T-cell (primary cell): ENCODE measurements at regions of chr14 and their contacts with region 1.

Region 1: GRCh38 chr14:22570132-22570949 is 18.7 kb downstream of the DAD1 start:
- DNase-seq: peak; percentile 62 to 98 (median 86)
- ATAC-seq: peak; percentile 86 to 90 (median 90)
- H3K4me3 ChIP-seq: peak overlapping the region; percentile 41 to 48
- H3K4me3 Mint-ChIP-seq: peak overlapping the region; percentile 64 to 77 (median 75)
- H3K27ac ChIP-seq: peak overlapping the region; percentile 99
- H3K27ac Mint-ChIP-seq: peak overlapping the region; percentile 98 to 99
- H3K4me1 ChIP-seq: peaks cover 40 to 41% of the 10 kb centered on the region in 2 experiments
- H3K4me1 Mint-ChIP-seq: peaks cover 44 to 69% (median 67%) of the 10 kb centered on the region in 3 donors
- H3K27me3 ChIP-seq: no peaks in the 10 kb centered on the region
- H3K27me3 Mint-ChIP-seq: no peaks in the 10 kb centered on the region

Region 2: DNA sequence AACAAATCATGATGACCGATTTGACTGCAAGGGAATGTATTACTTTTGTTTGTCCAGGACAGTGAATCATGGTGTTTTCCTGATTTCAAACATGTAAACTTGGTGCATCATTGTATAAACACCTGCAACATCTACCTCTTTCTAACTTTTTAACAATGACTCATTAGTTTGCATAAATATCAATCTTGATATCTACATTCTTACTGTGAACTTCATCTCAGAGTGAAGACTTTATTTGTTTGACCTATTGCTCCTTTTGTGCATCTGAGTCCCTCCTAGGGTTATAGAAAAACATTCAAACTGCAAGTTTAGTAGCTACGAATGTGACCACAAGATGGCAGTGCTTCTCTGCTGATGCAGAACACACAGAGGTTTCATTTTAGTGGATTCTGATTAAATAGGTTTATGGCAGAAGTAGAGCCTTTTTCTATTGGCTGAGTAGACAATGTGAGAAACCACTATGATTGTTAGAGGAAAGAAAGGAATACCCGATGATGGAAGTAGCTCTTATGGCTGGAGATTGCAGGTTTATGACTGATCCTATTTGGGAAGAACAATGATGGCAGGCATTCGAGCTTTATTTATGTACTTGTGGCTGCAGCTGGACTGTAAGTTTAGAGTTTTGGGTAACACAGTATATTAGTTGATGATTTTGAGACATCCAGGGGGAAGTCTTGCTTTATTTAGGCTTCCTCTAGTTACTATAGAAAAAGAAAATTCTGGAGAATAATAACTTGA is 652.5 kb before region 1 on chr14:
- CTCF ChIA-PET with region 1: interaction called, 3 to 11 read pairs
- POLR2A ChIA-PET with region 1: no interaction called
- DNase-seq: peak in 32 of 35 experiments; percentile 14 to 84 (median 50)
- ATAC-seq: peak; percentile 63 to 71 (median 64)
- H3K4me3 ChIP-seq: peak overlapping the region in 1 of 2 donors; percentile 18
- H3K4me3 Mint-ChIP-seq: peak overlapping the region; percentile 63 to 75 (median 67)
- H3K27ac ChIP-seq: peak overlapping the region; percentile 15
- H3K27ac Mint-ChIP-seq: peak overlapping the region; percentile 79 to 89
- H3K4me1 ChIP-seq: peaks cover 2 to 43% of the 10 kb centered on the region in 2 experiments
- H3K4me1 Mint-ChIP-seq: peaks cover 48 to 76% (median 66%) of the 10 kb centered on the region in 3 donors
- H3K27me3 ChIP-seq: no peaks in the 10 kb centered on the region
- H3K27me3 Mint-ChIP-seq: no peaks in the 10 kb centered on the region

Region 3: GRCh38 chr14:22549981-22550673 is 20.2 kb before region 1 on chr14:
- CTCF ChIA-PET with region 1: interaction called, 5 to 133 read pairs
- POLR2A ChIA-PET with region 1: interaction called, 4 to 13 read pairs
- DNase-seq: peak in 29 of 35 experiments; percentile 36 to 74 (median 57)
- ATAC-seq: peak; percentile 58 to 65 (median 63)
- H3K4me3 ChIP-seq: peak overlapping the region; percentile 18 to 35
- H3K4me3 Mint-ChIP-seq: peak overlapping the region; percentile 71 to 86 (median 77)
- H3K27ac ChIP-seq: peak overlapping the region; percentile 99
- H3K27ac Mint-ChIP-seq: peak overlapping the region; percentile 98 to 99
- H3K4me1 ChIP-seq: peaks cover 74 to 98% of the 10 kb centered on the region in 2 experiments
- H3K4me1 Mint-ChIP-seq: peaks cover 95 to 96% (median 95%) of the 10 kb centered on the region in 3 donors
- H3K27me3 ChIP-seq: no peaks in the 10 kb centered on the region
- H3K27me3 Mint-ChIP-seq: no peaks in the 10 kb centered on the region

Region 4: GRCh38 chr14:22598099-22598899 is 28.0 kb after region 1 on chr14 and contains the start of gene ABHD4:
- CTCF ChIA-PET with region 1: interaction called, 6 to 12 read pairs
- POLR2A ChIA-PET with region 1: interaction called, 4 read pairs
- DNase-seq: peak in 30 of 35 experiments; percentile 12 to 71 (median 37)
- ATAC-seq: peak; percentile 83 to 90 (median 89)
- H3K4me3 ChIP-seq: peak within 1 kb of the TSS; percentile 72 to 85
- H3K4me3 Mint-ChIP-seq: peak within 1 kb of the TSS; percentile 96 to 99 (median 97)
- H3K27ac ChIP-seq: peak within 1 kb of the TSS; percentile 17
- H3K27ac Mint-ChIP-seq: peak within 1 kb of the TSS; percentile 80 to 93
- H3K4me1 ChIP-seq: peaks cover 3 to 17% of the 10 kb centered on the region in 2 experiments
- H3K4me1 Mint-ChIP-seq: peaks cover 32 to 38% (median 37%) of the 10 kb centered on the region in 3 donors
- H3K27me3 ChIP-seq: peaks cover 0 to 5% of the 10 kb centered on the region in 2 experiments
- H3K27me3 Mint-ChIP-seq: peaks cover 0 to 3% of the 10 kb centered on the region in 2 donors
- total RNA-seq, gene ABHD4: 10.1 to 20.9 (median 17.3) TPM

Region 5: GRCh38 chr14:22822571-22823098 is 252.3 kb after region 1 on chr14:
- CTCF ChIA-PET with region 1: interaction called, 3 to 15 read pairs
- POLR2A ChIA-PET with region 1: no interaction called
- DNase-seq: peak in 34 of 35 experiments; percentile 29 to 83 (median 59)
- ATAC-seq: peak; percentile 89 to 93 (median 91)
- H3K4me3 ChIP-seq: peak overlapping the region; percentile 24 to 25
- H3K4me3 Mint-ChIP-seq: peak overlapping the region; percentile 41 to 54 (median 50)
- H3K27ac ChIP-seq: no peak overlapping the region
- H3K27ac Mint-ChIP-seq: no peak overlapping the region
- H3K4me1 ChIP-seq: peaks cover 7 to 21% of the 10 kb centered on the region in 2 experiments
- H3K4me1 Mint-ChIP-seq: peaks cover 15 to 22% (median 17%) of the 10 kb centered on the region in 3 donors
- H3K27me3 ChIP-seq: peaks cover 0 to 55% of the 10 kb centered on the region in 2 experiments
- H3K27me3 Mint-ChIP-seq: peaks cover 6 to 13% of the 10 kb centered on the region in 2 donors

Region 6: DNA sequence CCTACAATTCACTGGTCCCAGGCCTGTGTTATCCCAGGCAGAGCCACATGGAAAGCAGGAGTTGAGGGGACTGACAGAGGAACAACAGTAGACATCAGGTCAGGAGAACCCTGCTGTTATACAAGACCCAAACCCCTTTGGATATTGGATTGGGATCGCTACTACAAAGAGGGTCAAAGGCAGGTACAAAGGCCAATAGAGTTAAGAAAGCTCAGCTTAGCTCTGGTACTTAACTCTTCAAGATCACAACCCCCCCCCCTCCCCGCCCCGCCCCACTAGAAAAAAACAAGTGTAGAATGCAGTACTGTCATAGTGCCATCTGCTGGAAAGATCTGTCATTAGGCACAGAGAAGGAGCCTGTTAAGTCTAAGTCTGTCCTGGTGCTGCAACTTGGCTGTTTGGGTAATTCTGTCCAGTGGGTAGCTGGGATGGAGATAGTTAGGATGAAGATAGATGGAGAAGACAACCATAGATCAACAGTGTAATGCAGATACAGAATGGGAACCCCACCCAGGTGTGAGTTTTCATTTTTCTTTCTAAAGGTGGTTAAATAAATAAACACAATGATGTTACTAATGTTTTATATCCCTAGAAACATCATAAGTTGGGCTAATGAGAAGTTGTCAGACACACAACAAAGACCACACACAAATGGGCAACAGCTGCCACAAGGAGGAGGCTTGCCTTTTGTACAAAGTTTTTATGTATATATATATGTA is 329.9 kb after region 1 on chr14:
- CTCF ChIA-PET with region 1: interaction called, 7 to 19 read pairs
- POLR2A ChIA-PET with region 1: no interaction called
- DNase-seq: peak in 26 of 35 experiments; percentile 17 to 85 (median 39)
- ATAC-seq: peak; percentile 73 to 81 (median 80)
- H3K4me3 ChIP-seq: no peak overlapping the region
- H3K4me3 Mint-ChIP-seq: no peak overlapping the region
- H3K27ac ChIP-seq: no peak overlapping the region
- H3K27ac Mint-ChIP-seq: peak overlapping the region in 1 of 2 donors; percentile 41
- H3K4me1 ChIP-seq: peaks cover 2 to 10% of the 10 kb centered on the region in 2 experiments
- H3K4me1 Mint-ChIP-seq: peaks cover 8 to 11% (median 9%) of the 10 kb centered on the region in 3 donors
- H3K27me3 ChIP-seq: no peaks in the 10 kb centered on the region
- H3K27me3 Mint-ChIP-seq: no peaks in the 10 kb centered on the region